ENCODE measurements at regions of chr6 and their contacts with region 1.

Region 1: DNA sequence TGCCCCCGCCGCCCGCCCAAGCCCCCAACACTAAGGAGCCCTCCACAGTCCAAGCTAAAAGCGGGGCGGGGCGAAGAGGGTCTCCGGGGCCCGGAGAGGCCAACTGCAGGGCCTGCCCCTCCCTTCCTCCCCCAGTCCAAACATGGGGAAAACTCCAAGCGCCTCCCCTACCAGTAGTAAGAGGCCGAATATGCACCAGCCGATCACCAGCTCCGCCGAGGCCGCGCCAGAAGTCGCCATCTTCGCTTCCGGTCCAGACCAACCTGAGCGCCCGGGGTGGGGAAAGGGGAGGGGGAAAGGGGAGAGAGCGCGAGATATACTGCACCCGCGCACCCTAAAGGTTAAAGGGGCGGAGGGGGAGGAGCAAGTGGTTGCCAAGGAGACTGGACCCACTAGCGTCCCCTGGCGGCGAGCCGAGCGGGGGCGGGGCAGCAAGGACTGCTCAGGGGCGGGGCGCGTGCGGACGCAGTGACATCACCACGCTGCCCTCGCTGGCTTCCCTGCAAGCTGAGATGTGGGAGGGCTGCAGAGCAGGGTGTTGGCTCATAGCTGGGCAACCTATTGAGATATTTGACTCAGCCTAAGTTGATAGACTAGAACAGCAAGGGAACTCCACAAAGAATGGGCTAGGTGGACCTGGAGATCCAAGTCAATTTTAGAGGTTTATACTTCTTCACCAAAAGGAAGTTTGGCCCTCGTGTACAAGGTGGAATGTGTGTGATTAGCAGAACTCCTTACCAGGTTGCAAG is at the start of gene LMBRD1:
- DNase-seq: peak; percentile 99
- H3K4me3 Mint-ChIP-seq: peak within 1 kb of the TSS; percentile 90
- H3K27ac Mint-ChIP-seq: peak within 1 kb of the TSS; percentile 87
- H3K4me1 Mint-ChIP-seq: peaks cover 33% of the 10 kb centered on the region
- H3K27me3 Mint-ChIP-seq: no peaks in the 10 kb centered on the region
- total RNA-seq, gene LMBRD1: 30.0 to 30.7 TPM

Region 2: DNA sequence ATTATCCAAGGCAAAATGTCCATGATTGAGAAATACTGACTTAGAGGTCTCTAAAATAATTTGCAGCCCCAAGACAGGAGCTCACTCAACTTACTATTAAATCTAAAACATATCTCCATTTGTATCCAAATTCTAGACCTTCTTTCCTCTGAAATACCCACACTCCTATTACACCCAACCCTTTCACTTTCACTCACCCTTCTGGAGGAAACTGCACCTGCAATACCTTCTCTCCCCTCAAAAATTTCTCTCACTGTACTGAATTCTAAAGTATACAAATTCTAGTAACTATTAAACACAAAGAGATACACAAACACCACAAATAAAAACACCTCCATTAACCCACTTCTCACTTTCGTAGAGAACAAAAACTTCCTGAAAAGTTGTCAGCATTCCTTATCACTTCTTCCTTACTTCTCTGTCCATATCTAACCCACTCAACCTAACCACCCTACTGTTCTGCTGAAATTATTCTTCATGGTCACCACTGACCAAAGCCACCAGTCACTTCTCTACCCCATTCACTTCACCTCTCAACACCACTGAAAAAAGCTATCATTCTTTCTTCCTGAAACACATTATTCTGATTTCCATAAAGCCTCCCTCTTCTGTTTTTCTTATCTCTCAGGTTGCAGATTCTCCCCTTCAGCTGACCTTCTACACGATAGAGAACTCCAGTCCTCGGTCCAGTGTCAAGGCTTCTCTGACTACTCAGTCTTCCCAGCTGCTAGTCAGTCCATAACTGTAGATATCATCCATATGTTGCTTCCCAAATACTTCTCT is 12.0 kb before region 1 on chr6:
- CTCF ChIA-PET with region 1: interaction called, 12 read pairs
- POLR2A ChIA-PET with region 1: interaction called, 4 read pairs
- DNase-seq: no peak
- H3K4me3 Mint-ChIP-seq: no peak overlapping the region
- H3K27ac Mint-ChIP-seq: no peak overlapping the region
- H3K4me1 Mint-ChIP-seq: peaks cover 17% of the 10 kb centered on the region
- H3K27me3 Mint-ChIP-seq: no peaks in the 10 kb centered on the region

Region 3: GRCh38 chr6:69813508-69813907 is 16.7 kb after region 1 on chr6:
- CTCF ChIA-PET with region 1: interaction called, 102 read pairs
- POLR2A ChIA-PET with region 1: interaction called, 87 read pairs
- DNase-seq: no peak
- H3K4me3 Mint-ChIP-seq: peak overlapping the region; percentile 7
- H3K27ac Mint-ChIP-seq: peak overlapping the region; percentile 83
- H3K4me1 Mint-ChIP-seq: peaks cover 59% of the 10 kb centered on the region
- H3K27me3 Mint-ChIP-seq: no peaks in the 10 kb centered on the region